ENCODE measurements at regions of chr11 and their contacts with region 1.

Region 1: DNA sequence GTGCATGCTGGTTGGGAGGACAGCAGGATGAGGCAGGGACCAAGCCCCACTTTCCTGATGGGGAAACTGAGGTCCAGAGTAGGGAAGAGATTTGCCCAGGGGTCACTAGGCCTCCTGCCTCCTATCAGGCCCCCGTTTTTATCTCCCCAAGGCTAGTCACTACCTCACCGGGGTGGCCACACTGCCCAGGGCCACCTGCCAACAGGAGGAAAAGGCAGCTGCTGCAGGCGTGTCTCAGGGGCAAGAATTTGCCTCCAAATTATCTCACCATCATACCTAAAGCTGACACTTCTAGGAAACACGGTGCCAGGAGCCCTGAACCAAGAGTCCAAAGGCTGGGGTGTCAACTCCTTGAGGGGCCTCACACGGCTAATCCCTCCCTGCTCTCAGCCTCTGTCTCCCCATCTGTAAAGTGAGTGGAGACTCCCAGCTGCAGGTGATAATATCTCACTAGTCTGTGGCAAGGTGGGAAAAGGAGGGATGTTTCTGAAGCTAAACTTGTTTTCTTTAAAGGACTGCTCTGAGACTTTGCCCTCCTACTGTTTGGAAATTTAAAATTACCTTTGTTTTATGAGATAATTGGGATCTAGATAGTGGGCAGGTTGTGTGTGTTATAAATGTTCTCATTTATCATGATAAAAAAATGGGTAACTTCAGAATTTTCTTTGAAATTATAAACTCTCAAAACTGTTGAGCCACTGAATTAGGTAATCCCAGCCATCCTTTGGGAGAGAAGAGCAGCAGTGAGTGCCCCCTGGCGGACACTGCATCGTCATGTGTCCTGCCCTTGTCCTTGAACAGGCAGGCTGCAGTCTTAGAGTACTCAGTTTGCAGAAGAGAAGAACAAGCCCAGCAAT is 60.0 kb downstream of the MYO7A start:
- DNase-seq: peak; percentile 80 to 87
- H3K4me3 ChIP-seq: no peak overlapping the region
- H3K27ac ChIP-seq: no peak overlapping the region
- H3K4me1 ChIP-seq: peaks cover 0 to 5% of the 10 kb centered on the region in 2 donors
- H3K27me3 ChIP-seq: no peaks in the 10 kb centered on the region
- CTCF ChIP-seq: peak; percentile 66 to 83 (median 79)
- POLR2A ChIP-seq: no peak

Region 2: GRCh38 chr11:77047007-77047927 is 140.7 kb before region 1 on chr11:
- intact Hi-C with region 1: loop called (anchors 10 kb)
- DNase-seq: peak; percentile 77 to 81
- H3K4me3 ChIP-seq: peak overlapping the region in 1 of 3 donors; percentile 26
- H3K27ac ChIP-seq: peak overlapping the region in 1 of 3 donors; percentile 4
- H3K4me1 ChIP-seq: peaks cover 0 to 12% of the 10 kb centered on the region in 2 donors
- H3K27me3 ChIP-seq: no peaks in the 10 kb centered on the region
- CTCF ChIP-seq: peak; percentile 35 to 85 (median 66)
- POLR2A ChIP-seq: no peak

Region 3: DNA sequence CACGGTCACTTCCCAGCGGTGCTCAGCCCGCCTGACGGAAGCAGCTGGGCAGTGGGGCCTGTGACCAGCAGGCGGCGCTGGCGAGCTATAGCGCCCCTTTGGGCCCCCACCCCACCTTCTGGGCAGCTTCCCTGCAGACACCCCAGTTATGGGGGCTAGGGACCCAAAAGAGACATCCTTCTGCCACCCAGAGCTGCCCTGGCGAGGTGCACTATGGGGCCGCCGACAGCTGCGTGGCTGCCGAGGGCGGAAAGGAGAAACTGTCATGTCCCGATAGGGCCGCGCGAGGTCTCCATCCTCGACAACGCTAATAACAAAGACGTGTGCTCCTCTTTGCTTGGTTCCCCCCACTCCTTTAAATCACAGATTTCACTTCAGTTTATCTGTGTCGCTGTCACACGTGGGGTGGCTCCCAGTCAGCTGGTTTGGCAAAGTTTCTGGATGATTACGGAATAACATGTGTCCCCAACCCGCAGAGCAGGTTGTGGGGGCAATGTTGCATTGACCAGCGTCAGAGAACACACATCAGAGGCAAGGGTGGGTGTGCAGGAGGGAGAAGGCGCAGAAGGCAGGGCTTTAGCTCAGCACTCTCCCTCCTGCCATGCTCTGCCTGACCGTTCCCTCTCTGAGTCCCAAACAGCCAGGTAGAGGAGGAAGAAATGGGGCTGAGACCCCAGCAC is 60.6 kb before region 1 on chr11:
- intact Hi-C with region 1: loop called (anchors 5 kb)
- DNase-seq: peak; percentile 49 to 57
- H3K4me3 ChIP-seq: peak overlapping the region in 1 of 3 donors; percentile 29
- H3K27ac ChIP-seq: no peak overlapping the region
- H3K4me1 ChIP-seq: peaks cover 11 to 16% of the 10 kb centered on the region in 2 donors
- H3K27me3 ChIP-seq: no peaks in the 10 kb centered on the region
- CTCF ChIP-seq: peak; percentile 95 to 98 (median 96)
- POLR2A ChIP-seq: no peak

Region 4: GRCh38 chr11:77140231-77140851 is 47.7 kb before region 1 on chr11:
- intact Hi-C with region 1: no loop called
- DNase-seq: no peak
- H3K4me3 ChIP-seq: no peak overlapping the region
- H3K27ac ChIP-seq: no peak overlapping the region
- H3K4me1 ChIP-seq: no peaks in the 10 kb centered on the region
- H3K27me3 ChIP-seq: peaks cover 3% of the 10 kb centered on the region
- CTCF ChIP-seq: no peak
- POLR2A ChIP-seq: no peak

Region 5: GRCh38 chr11:77547863-77548551 is 360.0 kb after region 1 on chr11:
- intact Hi-C with region 1: loop called (anchors 2 kb)
- DNase-seq: peak; percentile 30 to 49
- H3K4me3 ChIP-seq: no peak overlapping the region
- H3K27ac ChIP-seq: no peak overlapping the region
- H3K4me1 ChIP-seq: no peaks in the 10 kb centered on the region
- H3K27me3 ChIP-seq: no peaks in the 10 kb centered on the region
- CTCF ChIP-seq: peak; percentile 34 to 87 (median 64)
- POLR2A ChIP-seq: no peak